Cardiac septum (tissue), 1 donor: ENCODE measurements at regions of chr22 and their contacts with region 1.

Region 1: DNA sequence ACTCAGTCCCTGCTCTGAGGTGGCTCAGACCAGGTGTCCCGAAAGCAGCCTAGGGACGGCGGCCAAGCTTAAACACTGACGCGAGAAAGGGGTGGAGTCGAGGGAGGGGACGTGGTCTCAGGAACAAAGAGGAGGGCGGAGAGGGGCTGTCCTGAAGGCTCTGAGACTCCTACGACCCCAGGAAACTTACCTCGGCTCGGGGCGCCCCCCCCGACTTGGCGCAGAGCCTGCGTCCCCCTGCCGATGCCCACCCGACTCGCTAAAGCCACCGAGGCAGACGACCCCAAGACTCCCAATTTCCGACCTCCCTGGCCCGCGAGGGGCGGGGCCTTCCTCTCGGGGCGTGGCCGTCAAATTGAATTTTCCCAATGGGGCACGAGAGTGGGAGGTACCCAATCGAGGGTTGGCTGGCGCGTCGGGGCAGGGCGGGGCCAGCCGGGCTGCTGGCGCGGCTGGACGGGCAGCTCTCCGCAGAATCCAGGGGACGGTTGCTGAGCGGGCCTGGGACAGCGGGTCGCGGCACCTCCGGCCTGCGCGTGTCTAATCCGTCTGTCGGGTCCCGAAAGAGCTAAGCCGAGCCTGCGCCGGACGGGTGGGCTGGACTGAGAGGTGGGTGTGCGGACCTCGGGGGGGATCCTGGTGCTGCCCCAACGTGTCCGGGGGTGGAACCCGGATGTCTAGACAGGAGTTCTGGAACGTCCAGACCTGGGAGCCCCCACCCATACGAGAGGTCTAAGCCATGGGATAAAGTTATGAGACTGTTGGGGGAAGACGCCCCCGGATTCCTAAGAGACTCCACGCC is at the start of gene SMTN:
- DNase-seq: peak; percentile 96
- total RNA-seq, gene SMTN: 128 TPM

Region 2: GRCh38 chr22:30459181-30460052 is 621.6 kb before region 1 on chr22:
- intact Hi-C with region 1: no loop called
- DNase-seq: no peak

Region 3: DNA sequence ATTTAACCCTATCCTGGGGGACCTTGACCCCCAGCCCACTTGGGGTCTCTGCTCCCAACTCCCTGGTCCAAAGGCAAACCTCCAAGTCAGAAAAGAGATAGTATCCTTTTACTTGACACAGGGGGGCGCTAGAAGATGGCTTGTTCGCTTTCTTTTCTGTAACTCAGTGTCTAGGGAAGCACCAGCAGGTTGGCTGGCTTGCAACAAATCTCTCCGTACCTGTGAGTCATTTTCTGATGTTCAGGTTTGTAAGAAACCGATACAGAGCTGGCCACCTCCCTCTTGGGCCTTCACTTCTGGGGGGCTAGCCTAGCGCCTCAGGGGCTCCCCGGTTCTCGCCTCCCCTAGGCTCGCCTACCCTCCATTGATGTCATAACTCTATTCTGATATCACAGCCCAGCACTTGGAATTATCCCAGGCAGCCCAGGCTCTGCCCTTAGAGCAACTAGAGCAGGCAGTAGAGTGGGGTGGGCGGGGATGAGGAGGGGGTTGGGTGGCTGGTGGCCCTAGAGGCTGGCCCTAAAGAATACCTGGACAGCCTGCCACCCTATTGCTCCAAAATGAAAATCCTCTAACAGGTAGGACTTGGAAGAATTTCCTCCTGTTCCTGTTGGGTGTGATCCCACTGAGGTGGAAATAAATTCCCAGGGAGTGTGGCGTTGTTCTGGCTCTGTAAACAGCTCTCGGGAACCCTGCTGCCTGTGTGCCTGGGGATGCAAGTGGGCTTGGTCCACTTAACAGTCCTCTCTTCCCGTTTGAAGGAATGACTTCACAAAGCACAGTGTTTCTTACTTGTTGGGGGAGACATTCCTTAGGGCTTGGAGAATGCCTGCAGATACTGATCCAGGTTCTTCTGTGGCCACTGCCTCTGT is 317.0 kb before region 1 on chr22:
- intact Hi-C with region 1: loop called (anchors 10 kb)
- DNase-seq: no peak

Region 4: GRCh38 chr22:30890686-30891442 is 190.2 kb before region 1 on chr22:
- intact Hi-C with region 1: no loop called
- DNase-seq: peak; percentile 71

Region 5: GRCh38 chr22:30968924-30969539 is 112.0 kb before region 1 on chr22 and contains the start of gene TUG1:
- intact Hi-C with region 1: loop called (anchors 2 kb)
- DNase-seq: peak; percentile 99
- total RNA-seq, gene TUG1: 52.6 TPM

Region 6: DNA sequence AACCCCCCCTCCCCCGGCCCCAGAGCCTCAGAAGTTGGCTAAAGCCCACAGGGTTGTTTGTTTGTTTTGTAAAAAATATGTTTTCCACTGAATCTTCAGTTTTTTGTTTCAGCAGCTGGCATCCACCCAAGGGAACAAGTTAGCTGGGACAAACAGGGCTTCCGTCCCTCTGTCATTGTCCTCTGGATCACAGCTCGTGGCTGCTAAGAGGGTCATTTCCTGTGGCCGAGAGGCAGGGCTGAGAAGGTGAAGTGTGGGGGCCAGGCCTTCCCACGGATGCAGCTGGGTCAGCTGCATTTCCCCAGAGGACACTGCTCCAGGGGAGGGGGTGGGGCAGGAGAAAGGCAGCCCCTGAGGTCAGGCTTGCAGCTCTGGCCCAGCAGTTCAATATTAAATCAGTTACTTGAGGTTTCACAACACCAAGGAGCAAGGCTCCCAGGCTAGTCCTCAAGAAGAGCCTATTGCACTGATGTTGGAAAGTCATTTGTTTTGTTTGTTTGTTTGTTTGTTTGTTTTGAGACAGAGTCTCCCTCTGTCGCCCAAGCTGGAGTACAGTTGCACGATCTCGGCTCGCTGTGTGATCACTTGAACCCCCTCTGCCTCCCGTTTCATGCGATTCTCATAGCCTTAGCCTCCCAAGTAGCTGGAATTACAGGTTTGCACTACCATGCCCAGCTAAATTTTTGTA is 34.4 kb before region 1 on chr22:
- intact Hi-C with region 1: loop called (anchors 2 kb)
- DNase-seq: peak; percentile 89